Activated naive CD4-positive, alpha-beta T cell treated with anti-CD3 and anti-CD28 coated beads for 36 hours (primary cell): ENCODE measurements at regions of chr15 and their contacts with region 1.

Region 1: DNA sequence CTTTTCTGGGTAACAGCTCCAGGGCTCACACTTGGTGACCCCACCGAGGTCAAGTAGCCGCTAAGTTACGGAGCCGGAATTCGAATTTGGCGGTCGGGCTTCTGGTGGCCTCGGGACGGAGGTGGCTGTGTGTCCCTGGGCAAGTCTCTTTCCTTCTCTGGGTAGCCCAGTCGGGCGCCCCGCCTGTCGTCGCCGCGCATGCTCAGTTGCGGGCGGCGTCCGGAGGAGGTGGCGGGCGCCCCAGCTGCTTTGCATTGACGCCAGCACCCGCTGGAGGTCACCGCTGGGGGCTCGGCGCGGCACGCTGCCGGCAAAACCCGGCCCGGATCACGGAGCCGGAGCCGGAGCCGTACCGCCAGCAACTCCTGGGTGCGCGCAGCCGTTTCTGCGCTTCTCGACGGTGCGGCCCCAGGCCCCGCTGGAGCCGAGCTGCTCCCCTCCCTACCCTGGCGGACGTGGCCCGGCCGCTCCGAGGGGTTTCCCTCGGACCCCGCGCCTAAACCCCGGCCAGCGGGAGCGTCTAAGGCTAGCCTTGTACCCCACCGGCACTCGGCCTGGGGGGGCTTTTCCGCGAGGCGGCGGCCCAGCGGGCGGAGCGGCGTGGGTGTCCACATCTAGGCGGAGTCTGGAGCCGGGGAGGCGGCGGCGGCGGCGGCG is 474 bp upstream of the PDE8A start:
- DNase-seq: peak; percentile 95
- H3K4me3 Mint-ChIP-seq: peak overlapping the region; percentile 92
- H3K27ac Mint-ChIP-seq: peak overlapping the region; percentile 93
- H3K4me1 Mint-ChIP-seq: peaks cover 43% of the 10 kb centered on the region
- H3K27me3 Mint-ChIP-seq: no peaks in the 10 kb centered on the region

Region 2: DNA sequence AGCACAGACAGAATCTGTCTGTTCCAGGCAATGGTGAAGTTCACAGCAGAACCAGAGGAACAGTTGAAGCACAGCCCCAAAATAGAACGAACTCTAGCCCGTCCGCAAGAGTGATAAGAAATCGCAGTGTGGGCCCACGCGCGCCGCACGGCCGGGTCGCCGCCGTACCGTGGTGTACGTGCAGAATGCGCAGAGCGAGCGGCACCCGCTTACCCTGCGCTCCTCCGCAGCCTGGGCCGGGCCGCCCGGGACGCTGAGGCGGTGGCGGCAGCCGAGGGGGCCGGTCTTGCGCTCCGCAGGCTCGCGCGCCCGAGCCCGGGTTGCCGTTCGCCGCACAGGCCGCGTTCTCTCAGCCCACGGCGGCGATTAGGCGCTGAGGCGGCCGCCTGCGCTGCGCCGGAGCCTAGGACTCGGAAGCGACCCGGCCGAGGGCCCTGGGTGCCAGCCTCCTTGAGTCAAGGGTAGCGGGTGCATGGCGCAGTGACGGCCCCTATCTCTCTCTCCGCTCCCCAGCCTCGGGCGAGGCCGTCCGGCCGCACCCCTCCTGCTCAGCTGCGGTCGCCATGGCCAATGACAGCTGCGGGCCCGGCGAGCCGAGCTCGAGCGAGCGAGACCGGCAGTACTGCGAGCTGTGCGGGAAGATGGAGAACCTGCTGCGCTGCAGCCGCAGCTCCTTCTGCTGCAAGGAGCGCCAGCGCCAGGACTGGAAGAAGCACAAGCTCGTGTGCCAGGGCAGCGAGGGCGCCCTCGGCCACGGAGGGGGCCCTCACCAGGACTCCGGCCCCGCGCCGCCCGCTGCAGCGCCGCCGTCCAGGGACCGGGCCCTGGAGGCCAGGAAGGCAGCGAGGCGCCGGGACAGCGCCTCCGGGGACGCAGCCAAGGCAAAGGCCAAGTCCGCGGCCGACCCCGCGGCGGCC is 347.6 kb before region 1 on chr15:
- CTCF ChIA-PET with region 1: no interaction called
- intact Hi-C with region 1: loop called (anchors 1 kb)
- DNase-seq: peak; percentile 63
- H3K4me3 Mint-ChIP-seq: peak overlapping the region; percentile 94
- H3K27ac Mint-ChIP-seq: peak overlapping the region; percentile 93
- H3K4me1 Mint-ChIP-seq: peaks cover 46% of the 10 kb centered on the region
- H3K27me3 Mint-ChIP-seq: no peaks in the 10 kb centered on the region

Region 3: DNA sequence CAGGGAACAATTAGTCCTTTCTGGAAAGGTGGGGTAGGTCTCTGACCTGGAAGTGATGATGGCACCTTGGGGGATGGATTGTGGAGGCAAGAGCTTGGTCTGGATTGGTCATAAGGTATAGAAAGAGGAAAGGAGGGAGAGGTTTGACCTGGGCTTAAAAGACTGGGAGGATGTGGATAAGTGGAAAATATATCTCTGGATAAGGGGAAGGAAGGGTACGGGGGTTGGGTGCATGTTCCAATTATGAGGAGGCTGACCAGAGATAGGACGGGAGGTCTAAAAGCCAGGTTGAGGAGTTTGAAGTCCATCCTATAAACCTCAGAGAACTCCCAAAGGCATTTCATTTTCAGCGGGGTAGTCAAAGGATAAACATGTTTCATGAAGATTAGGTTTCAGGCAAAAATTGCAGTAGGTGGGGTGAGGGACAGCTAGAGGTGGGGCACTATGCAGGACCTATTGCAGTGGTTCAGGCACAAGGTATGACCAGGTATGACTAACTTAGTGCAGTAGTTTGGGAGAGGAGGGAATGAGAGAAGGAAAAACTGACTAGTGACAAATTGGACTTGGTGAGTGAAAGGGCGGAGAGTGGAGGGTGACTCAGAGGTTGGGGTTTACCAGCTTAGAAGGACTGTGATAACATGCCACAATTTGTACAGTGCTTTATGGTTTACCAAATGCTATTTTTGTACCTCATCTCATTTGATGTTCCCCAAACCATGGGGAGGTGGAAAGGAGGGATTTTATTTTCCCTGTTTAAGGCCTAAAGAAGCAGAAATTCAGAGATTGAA is 11.2 kb after region 1 on chr15:
- CTCF ChIA-PET with region 1: interaction called, 4 read pairs
- intact Hi-C with region 1: loop called (anchors 1 kb)
- DNase-seq: peak; percentile 71
- H3K4me3 Mint-ChIP-seq: peak overlapping the region; percentile 1
- H3K27ac Mint-ChIP-seq: peak overlapping the region; percentile 68
- H3K4me1 Mint-ChIP-seq: peaks cover 62% of the 10 kb centered on the region
- H3K27me3 Mint-ChIP-seq: no peaks in the 10 kb centered on the region

Region 4: GRCh38 chr15:85044251-85044853 is 63.2 kb after region 1 on chr15:
- CTCF ChIA-PET with region 1: interaction called, 3 read pairs
- intact Hi-C with region 1: loop called (anchors 1 kb)
- DNase-seq: peak; percentile 74
- H3K4me3 Mint-ChIP-seq: no peak overlapping the region
- H3K27ac Mint-ChIP-seq: no peak overlapping the region
- H3K4me1 Mint-ChIP-seq: peaks cover 16% of the 10 kb centered on the region
- H3K27me3 Mint-ChIP-seq: no peaks in the 10 kb centered on the region

Region 5: GRCh38 chr15:85063126-85064079 is 82.2 kb after region 1 on chr15:
- CTCF ChIA-PET with region 1: no interaction called
- intact Hi-C with region 1: no loop called
- DNase-seq: no peak
- H3K4me3 Mint-ChIP-seq: no peak overlapping the region
- H3K27ac Mint-ChIP-seq: no peak overlapping the region
- H3K4me1 Mint-ChIP-seq: peaks cover 34% of the 10 kb centered on the region
- H3K27me3 Mint-ChIP-seq: no peaks in the 10 kb centered on the region

Region 6: DNA sequence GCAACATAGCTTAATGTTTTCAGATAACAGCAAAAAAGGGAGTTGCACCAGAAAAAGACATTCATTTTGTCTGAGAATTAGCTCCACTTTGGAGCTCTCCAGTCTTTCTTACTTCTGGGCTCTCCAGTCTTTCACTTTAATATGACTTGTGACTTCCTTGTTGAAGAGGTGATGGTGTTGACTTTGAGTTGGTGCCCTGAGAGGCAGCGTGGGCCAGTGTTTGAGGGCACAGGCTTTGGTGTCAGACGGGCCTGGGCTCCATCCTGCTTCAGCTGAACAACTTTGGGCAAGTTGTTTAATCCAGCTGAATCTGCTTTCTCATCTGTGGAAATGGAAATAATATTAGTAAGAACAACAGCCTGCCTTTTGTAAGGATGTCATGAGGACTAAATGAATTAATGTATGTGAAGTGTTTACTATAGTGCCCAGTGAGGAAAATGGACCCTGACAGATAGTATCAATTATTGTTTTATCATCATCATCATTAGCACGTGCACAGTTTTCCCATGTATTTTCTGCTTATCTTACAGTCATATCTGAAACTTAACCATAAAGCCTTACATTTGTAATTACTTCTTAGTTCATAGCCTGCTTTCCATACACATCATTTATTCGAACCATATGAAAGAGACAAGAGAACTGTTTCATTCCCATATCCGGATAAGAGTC is 108.9 kb after region 1 on chr15:
- CTCF ChIA-PET with region 1: no interaction called
- intact Hi-C with region 1: no loop called
- DNase-seq: no peak
- H3K4me3 Mint-ChIP-seq: no peak overlapping the region
- H3K27ac Mint-ChIP-seq: no peak overlapping the region
- H3K4me1 Mint-ChIP-seq: no peaks in the 10 kb centered on the region
- H3K27me3 Mint-ChIP-seq: no peaks in the 10 kb centered on the region

Region 7: DNA sequence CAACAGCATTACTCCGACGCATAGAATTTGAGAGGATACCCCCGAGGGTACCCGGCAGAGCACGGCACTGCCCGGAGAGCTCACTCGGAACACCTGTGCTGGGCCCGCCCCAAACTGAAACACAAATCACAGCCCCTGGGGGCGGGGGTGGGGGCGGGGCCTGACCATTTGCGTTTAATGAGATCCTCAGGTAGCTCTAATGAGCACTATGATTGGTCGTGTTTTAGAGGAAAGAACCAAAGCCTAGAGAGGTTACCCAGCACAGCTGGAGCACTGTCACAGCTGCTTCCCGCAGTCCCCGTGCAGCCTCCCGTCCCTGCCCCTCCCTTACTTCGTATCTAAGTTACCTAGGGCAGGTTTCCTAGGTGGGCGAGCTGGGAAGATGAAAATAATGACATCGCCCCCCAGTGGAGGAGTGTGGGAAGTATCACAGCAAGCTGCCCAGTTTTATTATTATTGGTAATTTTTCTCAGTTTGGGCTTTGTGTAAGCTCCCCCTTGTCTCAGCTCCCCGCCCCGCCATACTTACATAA is 187.5 kb after region 1 on chr15:
- CTCF ChIA-PET with region 1: no interaction called
- intact Hi-C with region 1: loop called (anchors 1 kb)
- DNase-seq: peak; percentile 65
- H3K4me3 Mint-ChIP-seq: no peak overlapping the region
- H3K27ac Mint-ChIP-seq: no peak overlapping the region
- H3K4me1 Mint-ChIP-seq: peaks cover 6% of the 10 kb centered on the region
- H3K27me3 Mint-ChIP-seq: peaks cover 27% of the 10 kb centered on the region